ENCODE measurements at regions of chr1 and their contacts with region 1.

Region 1: DNA sequence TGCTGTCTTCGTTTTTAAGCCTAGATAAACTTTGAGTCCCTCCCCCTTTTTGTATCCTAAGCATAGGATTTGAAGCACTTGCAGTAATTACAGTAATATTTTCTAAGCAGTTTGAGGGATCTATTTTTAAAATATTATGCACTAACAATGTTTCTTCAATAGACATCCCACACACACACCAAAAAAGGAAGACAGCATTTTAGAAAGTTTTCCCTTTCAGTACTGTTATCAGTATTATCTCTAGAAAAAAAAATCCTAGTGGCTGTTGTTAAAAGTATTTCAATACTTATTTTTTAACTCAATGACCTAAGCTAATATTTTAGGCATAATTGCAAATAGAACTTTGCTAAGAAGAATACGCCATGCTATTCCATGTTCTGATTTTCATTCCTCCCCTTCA is 15.1 kb downstream of the MCOLN3 start:
- DNase-seq: no peak
- H3K4me3 ChIP-seq: no peak overlapping the region
- H3K27ac ChIP-seq: no peak overlapping the region
- H3K4me1 ChIP-seq: no peaks in the 10 kb centered on the region
- H3K27me3 ChIP-seq: no peaks in the 10 kb centered on the region
- CTCF ChIP-seq: no peak
- EP300 ChIP-seq: no peak
- POLR2A ChIP-seq: no peak

Region 2: DNA sequence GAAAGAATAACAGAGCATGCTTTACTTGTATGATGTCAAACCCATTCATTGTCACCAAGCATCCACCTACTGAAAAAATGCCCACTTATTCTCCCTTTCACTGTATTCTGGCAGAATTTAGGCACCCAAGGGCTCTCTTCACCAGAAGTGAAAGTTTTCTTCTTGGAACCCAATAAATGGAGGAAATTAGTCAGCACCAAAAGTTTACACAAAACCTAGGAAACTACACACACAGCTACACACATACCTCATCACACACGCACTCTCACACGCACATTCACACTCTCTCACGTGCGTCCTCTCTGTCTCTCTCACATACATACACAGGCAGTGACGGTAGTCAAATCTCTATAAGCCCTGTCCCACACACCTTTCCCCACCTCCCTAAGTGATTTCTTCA is 73.9 kb before region 1 on chr1:
- in situ Hi-C with region 1: no loop called
- intact Hi-C with region 1: loop called (anchors 5 kb)
- DNase-seq: no peak
- H3K4me3 ChIP-seq: no peak overlapping the region
- H3K27ac ChIP-seq: no peak overlapping the region
- H3K4me1 ChIP-seq: peaks cover 0 to 5% (median 2%) of the 10 kb centered on the region in 4 donors
- H3K27me3 ChIP-seq: no peaks in the 10 kb centered on the region
- CTCF ChIP-seq: no peak
- EP300 ChIP-seq: no peak
- POLR2A ChIP-seq: no peak

Region 3: DNA sequence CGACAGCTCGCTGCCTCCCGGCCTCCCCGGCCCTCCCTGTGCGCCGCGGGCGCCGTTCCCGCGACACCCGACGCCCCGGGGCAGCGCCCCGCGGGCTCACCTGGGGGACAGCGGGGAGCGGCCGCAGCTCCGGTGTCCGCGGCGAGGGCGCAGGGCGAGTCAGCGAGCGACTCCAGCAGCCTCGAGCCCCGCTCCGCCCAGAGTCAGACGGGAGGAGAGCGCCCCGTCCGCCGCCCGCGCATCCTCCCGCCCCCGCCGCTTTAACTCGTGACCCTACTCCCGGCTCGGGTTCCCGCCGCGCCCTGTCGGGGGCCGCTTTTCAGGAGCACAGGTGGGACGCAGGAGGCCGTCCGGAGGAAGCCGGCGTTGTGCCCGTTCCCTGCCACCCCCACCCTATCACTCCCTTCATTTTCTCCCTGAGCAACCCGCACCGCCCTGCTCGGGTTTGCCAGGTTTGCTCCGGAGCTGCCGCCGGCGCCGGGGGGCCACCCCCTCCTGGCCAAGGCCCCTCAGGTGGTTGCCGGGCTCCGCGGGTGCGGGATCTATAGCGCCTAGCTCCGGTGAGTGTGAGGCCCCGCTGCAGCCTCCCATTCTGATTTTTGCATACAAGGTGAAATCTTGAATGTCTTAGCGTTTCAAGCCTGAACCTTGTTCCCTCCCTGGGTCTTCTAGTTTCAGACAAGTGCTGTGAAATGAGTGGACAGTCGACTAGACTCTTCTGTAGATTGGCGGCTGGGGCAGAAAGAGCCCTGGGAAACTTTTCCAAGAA is 15.3 kb after region 1 on chr1 and contains the start of gene MCOLN3:
- in situ Hi-C with region 1: no loop called
- intact Hi-C with region 1: no loop called
- DNase-seq: peak; percentile 56
- H3K4me3 ChIP-seq: peak within 1 kb of the TSS; percentile 16 to 61 (median 44)
- H3K27ac ChIP-seq: no peak within 1 kb of the TSS
- H3K4me1 ChIP-seq: peaks cover 0 to 14% (median 7%) of the 10 kb centered on the region in 4 donors
- H3K27me3 ChIP-seq: peaks cover 79% of the 10 kb centered on the region
- CTCF ChIP-seq: no peak
- EP300 ChIP-seq: no peak
- POLR2A ChIP-seq: no peak
- total RNA-seq, gene MCOLN3: 1.9 to 7.6 TPM in 2 of 4 donors, not detected in the others

Region 4: DNA sequence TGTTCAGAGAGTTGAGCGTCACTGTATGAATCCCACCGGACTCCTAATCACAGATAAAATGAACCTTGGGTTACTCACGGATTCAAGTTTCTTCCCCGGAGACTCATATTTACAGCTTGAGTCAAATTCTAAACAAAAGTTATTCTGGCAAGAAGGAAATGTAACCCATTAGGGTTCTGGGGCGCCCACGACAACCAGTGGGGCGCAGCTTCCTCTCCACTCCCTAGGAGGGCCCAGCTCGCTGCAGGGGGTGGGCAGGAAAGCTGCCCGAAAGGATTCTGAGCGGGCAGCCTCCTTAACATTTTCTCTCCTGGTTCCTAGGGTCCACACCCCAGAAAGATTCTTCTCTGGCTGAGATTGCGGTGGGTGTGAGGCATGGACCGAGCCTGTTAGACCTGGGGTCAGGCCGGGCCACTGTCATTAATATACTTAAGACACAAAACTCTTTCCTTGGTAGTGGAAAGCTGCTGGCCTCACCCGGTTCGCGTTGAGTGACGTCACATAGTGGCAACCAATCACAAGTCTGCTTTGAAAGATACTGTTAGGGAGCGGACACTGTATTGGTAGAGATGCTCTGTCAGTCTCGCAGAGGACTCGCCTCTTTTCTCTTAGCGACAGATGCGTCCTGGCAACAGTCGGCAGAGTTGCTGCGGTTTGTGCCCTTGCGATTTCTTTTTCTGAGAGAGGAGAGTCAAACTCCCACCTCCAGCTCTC is 28.6 kb after region 1 on chr1:
- in situ Hi-C with region 1: no loop called
- intact Hi-C with region 1: no loop called
- DNase-seq: peak; percentile 93
- H3K4me3 ChIP-seq: peak overlapping the region; percentile 37 to 47 (median 38)
- H3K27ac ChIP-seq: peak overlapping the region; percentile 43 to 70 (median 54)
- H3K4me1 ChIP-seq: peaks cover 0 to 8% (median 0%) of the 10 kb centered on the region in 4 donors
- H3K27me3 ChIP-seq: no peaks in the 10 kb centered on the region
- CTCF ChIP-seq: no peak
- EP300 ChIP-seq: no peak
- POLR2A ChIP-seq: no peak

Measured in transverse colon (tissue), 4 donors.